ENCODE measurements at regions of chr13 and their contacts with region 1.

Region 1: DNA sequence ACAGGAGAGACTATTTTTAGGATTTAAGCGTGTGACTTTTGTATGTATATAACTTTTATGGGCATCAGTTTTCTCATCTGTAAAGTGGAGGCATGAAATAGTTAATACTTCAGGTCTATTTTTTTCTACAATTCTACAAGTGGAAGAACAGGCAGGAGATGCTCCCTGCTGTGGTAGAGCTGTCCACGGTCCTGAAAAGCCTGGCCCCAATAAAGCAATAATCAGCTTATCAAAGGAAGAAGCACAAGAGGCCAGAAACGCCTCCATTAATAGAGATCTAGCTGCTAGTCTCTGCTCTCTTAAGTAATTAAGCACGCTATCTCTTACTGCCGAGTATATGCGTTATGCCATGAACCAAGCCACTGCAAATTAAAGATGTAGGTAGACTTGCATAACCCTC is 28.0 kb upstream of the WASF3 start:
- DNase-seq: peak; percentile 52
- H3K4me3 Mint-ChIP-seq: no peak overlapping the region
- H3K27ac Mint-ChIP-seq: no peak overlapping the region
- H3K4me1 Mint-ChIP-seq: no peaks in the 10 kb centered on the region
- H3K27me3 Mint-ChIP-seq: peaks cover 17% of the 10 kb centered on the region

Region 2: DNA sequence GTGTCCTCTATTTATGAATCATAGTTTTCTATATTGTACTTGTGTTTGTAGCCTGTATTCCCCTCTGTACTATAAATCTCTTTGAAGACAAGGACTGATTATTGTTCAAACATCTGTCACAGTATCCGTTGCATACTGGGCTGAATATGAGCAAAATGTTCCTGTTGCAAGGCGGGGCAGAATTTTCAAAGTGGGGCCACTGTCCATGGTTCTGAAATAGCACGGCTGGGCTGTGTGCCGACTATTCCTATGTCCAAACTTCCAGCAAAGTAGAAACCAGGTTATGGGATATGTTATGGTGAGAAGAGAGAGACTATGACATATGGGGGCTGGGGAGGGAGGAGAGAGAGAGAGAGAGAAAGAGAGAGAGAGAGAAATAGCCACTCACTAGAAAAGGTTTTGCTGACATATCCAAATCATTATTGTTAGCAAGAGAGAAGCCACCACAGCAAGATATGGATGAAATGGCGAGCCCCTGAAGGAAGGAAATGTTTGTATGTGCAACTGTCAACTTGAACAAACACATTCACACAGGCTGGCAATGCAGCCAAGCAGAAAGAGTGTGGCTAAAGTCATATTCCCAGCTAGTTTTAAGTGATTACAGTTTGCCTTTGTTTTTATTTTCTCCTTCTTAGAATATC is 338.1 kb after region 1 on chr13:
- CTCF ChIA-PET with region 1: no interaction called
- intact Hi-C with region 1: loop called (anchors 5 kb)
- DNase-seq: peak; percentile 52
- H3K4me3 Mint-ChIP-seq: no peak overlapping the region
- H3K27ac Mint-ChIP-seq: no peak overlapping the region
- H3K4me1 Mint-ChIP-seq: no peaks in the 10 kb centered on the region
- H3K27me3 Mint-ChIP-seq: peaks cover 3% of the 10 kb centered on the region

Measured in activated naive CD4-positive, alpha-beta T cell treated with anti-CD3 and anti-CD28 coated beads for 36 hours (primary cell).